ENCODE measurements at regions of chr14 and their contacts with region 1.

Region 1: DNA sequence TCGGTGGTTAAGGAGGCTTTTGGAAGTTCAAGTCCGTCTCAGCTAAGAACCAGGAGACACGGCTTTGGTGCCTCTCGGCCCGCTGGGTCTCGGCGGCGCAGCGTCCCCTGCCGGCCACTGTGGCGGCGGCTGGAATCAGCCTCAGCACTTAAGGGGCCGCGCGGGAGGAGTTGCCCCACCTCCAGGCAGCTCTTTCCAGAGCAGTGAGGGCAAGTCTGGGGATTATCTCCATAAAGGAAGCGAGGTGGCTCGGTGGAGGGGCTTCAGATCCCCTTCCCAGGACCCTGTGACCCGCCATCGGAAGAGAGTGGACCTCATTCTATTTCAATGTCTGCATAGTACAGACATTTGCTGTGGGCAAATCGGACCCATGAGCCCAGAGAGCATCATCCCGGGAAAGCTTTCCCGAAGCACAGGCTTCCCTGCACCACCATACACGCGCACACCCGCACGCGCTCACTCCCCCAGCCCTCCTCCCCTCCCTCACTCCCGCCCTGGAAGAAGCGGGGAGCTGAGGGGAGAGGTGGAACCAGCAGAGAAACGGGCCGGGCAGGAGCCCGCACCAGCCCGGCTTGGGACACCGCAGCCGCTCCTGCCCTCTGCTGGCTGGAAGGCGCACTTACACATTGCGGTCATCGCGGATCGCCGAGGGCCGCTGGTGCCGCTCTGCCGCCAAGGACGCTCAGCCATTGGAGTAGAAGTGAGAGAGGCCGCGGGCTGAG is 15.9 kb downstream of the RNASE2 start:
- DNase-seq: peak; percentile 72
- H3K4me3 Mint-ChIP-seq: peak overlapping the region; percentile 93
- H3K27ac Mint-ChIP-seq: no peak overlapping the region
- H3K4me1 Mint-ChIP-seq: peaks cover 15% of the 10 kb centered on the region
- H3K27me3 Mint-ChIP-seq: peaks cover 35% of the 10 kb centered on the region

Region 2: DNA sequence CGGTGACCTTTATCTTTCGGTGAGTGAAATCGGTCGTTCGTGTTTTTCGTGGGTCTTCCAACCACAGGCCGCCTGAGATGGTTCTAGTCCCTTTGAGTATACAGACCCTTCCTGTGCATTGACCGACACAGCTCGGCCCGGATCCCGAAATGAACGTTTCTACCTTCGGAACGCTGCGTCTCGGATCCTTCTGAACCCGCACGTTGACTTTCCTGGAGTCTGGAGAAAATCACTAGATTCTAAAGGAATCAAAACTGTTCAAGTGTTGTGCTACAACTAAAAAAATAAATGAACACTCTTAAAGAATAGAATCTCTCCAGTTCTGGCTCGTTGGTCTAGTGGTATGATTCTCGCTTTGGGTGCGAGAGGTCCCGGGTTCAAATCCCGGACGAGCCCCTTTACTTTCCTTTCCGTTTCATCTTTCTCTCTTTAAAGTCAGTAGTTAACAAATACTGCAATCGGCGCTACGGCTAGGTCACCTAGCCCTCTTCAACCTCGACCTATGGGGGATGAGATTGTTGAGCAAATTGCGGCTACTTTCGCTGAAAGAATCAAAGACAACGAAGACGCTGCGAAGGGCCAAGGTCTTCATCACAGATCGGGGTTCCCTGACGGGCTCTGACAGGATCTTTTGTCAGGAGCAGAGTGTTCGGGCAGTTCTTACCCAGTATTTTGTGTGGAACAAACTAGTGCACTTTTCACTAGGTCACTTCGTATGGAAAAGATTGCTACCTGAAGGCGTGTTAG is 338.3 kb before region 1 on chr14:
- intact Hi-C with region 1: loop called (anchors 5 kb)
- DNase-seq: peak; percentile 53
- H3K4me3 Mint-ChIP-seq: peak overlapping the region; percentile 85
- H3K27ac Mint-ChIP-seq: peak overlapping the region; percentile 91
- H3K4me1 Mint-ChIP-seq: peaks cover 56% of the 10 kb centered on the region
- H3K27me3 Mint-ChIP-seq: peaks cover 76% of the 10 kb centered on the region

Region 3: GRCh38 chr14:20690848-20691523 is 280.2 kb before region 1 on chr14:
- intact Hi-C with region 1: no loop called
- DNase-seq: peak; percentile 31
- H3K4me3 Mint-ChIP-seq: no peak overlapping the region
- H3K27ac Mint-ChIP-seq: no peak overlapping the region
- H3K4me1 Mint-ChIP-seq: peaks cover 8% of the 10 kb centered on the region
- H3K27me3 Mint-ChIP-seq: no peaks in the 10 kb centered on the region

Region 4: GRCh38 chr14:20855652-20856291 is 115.4 kb before region 1 on chr14:
- intact Hi-C with region 1: loop called (anchors 1 kb)
- DNase-seq: peak; percentile 25
- H3K4me3 Mint-ChIP-seq: no peak overlapping the region
- H3K27ac Mint-ChIP-seq: no peak overlapping the region
- H3K4me1 Mint-ChIP-seq: peaks cover 9% of the 10 kb centered on the region
- H3K27me3 Mint-ChIP-seq: peaks cover 13% of the 10 kb centered on the region

Region 5: DNA sequence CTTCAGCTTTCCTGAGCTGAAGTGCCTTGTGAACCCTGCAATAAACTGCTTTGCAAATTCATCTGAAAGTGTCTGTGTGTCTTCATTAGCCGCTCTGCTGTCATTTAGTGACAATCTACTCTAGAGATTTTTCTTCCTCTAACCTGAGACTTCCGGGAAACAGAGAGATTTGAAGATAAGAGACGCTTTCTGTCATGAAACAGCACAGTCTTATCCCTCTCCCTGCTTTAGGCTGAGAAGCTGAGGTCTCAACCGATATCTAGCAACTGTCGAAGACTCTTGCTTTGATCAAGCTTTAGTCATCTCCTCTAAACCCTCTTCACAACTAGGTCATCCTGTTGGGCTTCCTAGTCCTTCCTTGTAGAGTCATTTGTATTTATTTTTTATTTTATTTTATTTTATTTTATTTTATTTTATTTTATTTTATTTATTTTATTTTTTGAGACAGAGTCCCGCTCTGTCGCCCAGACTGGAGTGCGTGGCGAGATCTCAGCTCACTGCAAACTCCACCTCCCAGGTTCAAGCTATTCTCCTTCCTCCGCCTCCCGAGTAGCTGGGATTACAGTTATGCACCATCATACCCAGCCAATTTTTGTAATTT is 14.7 kb before region 1 on chr14:
- intact Hi-C with region 1: loop called (anchors 1 kb)
- DNase-seq: no peak
- H3K4me3 Mint-ChIP-seq: no peak overlapping the region
- H3K27ac Mint-ChIP-seq: no peak overlapping the region
- H3K4me1 Mint-ChIP-seq: peaks cover 23% of the 10 kb centered on the region
- H3K27me3 Mint-ChIP-seq: no peaks in the 10 kb centered on the region

Region 6: DNA sequence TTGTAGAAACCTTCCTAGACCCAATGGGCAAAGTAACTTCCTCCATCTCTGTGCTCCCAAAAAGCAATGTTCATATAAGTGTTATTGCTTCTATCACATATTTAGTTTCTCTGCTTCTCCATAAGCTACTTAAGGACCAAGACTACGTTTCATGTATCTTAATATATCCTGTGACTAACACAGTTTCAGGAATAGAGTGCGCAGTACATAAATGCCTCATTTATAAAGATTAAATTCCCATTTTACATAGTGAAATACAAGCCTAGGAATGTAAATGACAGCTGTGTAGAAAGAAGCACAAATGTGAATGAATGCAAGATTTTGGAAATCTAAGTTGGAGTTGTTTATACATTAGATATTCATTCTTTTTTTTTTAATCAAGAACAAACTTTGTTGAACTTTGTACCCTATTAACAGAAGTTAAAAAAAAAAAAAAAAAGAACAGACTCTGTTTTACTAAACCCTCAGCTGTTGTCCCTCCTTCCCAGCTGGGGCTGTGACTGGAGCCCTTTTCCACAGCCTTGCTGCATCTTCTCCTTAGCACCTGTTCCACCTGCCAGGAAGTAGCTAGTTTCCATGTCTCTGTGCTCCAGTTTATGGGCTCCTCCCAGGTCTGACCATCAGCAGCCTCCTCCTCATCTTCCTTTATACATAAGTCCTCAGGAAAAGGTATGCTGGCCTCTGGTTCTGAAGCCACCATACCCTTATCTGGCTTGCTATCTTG is 11.7 kb after region 1 on chr14:
- intact Hi-C with region 1: no loop called
- DNase-seq: no peak
- H3K4me3 Mint-ChIP-seq: no peak overlapping the region
- H3K27ac Mint-ChIP-seq: no peak overlapping the region
- H3K4me1 Mint-ChIP-seq: no peaks in the 10 kb centered on the region
- H3K27me3 Mint-ChIP-seq: peaks cover 3% of the 10 kb centered on the region

Region 7: GRCh38 chr14:21103710-21104447 is 132.7 kb after region 1 on chr14:
- intact Hi-C with region 1: loop called (anchors 1 kb)
- DNase-seq: peak; percentile 92
- H3K4me3 Mint-ChIP-seq: peak overlapping the region; percentile 93
- H3K27ac Mint-ChIP-seq: peak overlapping the region; percentile 97
- H3K4me1 Mint-ChIP-seq: peaks cover 56% of the 10 kb centered on the region
- H3K27me3 Mint-ChIP-seq: peaks cover 6% of the 10 kb centered on the region